Adrenal gland (tissue), 19 donors: ENCODE measurements at regions of chr19 and their contacts with region 1.

Region 1: DNA sequence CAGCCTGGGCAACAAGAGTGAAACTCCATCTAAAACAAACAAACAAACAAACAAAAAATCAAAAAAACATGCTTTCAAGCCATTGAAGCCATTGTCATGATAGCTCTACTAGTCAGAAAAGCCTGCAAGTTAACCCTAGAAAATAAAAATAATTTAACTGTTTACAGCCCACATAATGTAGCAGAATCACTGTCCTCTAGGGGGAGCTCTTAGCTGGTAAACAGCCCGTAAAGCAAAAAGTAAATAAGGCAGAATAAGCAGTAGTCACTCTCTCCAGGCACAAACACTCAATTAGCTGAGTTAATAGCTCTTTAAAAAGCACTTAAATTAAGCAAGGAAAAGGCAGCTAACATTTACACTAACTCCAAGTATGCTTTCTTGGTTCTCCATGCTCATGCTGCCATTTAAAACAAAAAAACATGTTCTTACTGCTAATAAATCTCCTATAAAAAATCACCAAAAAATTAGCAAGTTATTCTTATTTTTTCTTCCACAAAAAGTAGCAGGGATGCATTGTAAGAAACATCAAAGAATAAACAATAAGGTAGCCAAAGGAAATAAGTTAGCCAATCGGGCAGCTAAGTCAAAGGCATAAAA is 11.3 kb downstream of the LILRB4 start:
- DNase-seq: no peak
- H3K4me3 ChIP-seq: no peak overlapping the region
- H3K27ac ChIP-seq: no peak overlapping the region
- H3K4me1 ChIP-seq: no peaks in the 10 kb centered on the region
- H3K27me3 ChIP-seq: peaks cover 3% of the 10 kb centered on the region
- CTCF ChIP-seq: peak in 5 of 6 experiments; percentile 32 to 72 (median 47)
- POLR2A ChIP-seq: no peak

Region 2: GRCh38 chr19:54481322-54481930 is 192.7 kb before region 1 on chr19:
- intact Hi-C with region 1: loop called (anchors 5 to 10 kb)
- DNase-seq: peak in 3 of 7 donors; percentile 12 to 40 (median 14)
- H3K4me3 ChIP-seq: no peak overlapping the region
- H3K27ac ChIP-seq: no peak overlapping the region
- H3K4me1 ChIP-seq: no peaks in the 10 kb centered on the region
- H3K27me3 ChIP-seq: no peaks in the 10 kb centered on the region
- CTCF ChIP-seq: peak; percentile 15 to 60 (median 46)
- POLR2A ChIP-seq: no peak

Region 3: DNA sequence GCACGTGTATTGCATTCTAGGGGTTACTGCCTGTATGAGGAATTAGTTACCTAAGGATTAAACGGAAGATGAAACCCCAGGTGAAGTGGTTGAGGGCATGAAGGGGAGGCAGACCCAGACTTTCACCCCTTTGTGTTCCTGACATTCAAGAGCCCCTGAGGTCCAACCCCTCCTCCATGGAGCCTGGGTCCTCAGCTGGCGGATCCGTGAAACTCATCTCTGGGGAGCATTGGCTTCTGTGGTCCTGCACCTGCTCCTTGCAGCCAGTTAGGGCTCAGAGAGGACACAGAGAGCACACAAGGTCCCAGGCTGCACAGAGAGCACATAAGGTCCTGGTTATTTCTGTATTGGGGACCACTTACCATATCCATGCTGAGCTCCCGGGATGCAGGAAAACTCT is 87.7 kb before region 1 on chr19:
- intact Hi-C with region 1: no loop called
- DNase-seq: no peak
- H3K4me3 ChIP-seq: no peak overlapping the region
- H3K27ac ChIP-seq: no peak overlapping the region
- H3K4me1 ChIP-seq: no peaks in the 10 kb centered on the region
- H3K27me3 ChIP-seq: no peaks in the 10 kb centered on the region
- CTCF ChIP-seq: no peak
- POLR2A ChIP-seq: no peak